ENCODE measurements at regions of chr2 and their contacts with region 1.

Region 1: GRCh38 chr2:42196403-42197267 is 27.5 kb downstream of the EML4 start:
- DNase-seq: peak in 12 of 14 experiments; percentile 16 to 79 (median 37)
- ATAC-seq: peak; percentile 82
- H3K4me3 ChIP-seq: no peak overlapping the region
- H3K4me3 Mint-ChIP-seq: peak overlapping the region; percentile 63
- H3K27ac ChIP-seq: no peak overlapping the region
- H3K27ac Mint-ChIP-seq: peak overlapping the region; percentile 61
- H3K4me1 ChIP-seq: peaks cover 48% of the 10 kb centered on the region
- H3K4me1 Mint-ChIP-seq: peaks cover 89% of the 10 kb centered on the region
- H3K27me3 ChIP-seq: no peaks in the 10 kb centered on the region
- H3K27me3 Mint-ChIP-seq: no peaks in the 10 kb centered on the region
- CTCF ChIP-seq: peak; percentile 92

Region 2: GRCh38 chr2:41869542-41870264 is 326.9 kb before region 1 on chr2:
- CTCF ChIA-PET with region 1: no interaction called
- POLR2A ChIA-PET with region 1: no interaction called
- intact Hi-C with region 1: loop called in 1 of 2 experiments (anchors 10 kb)
- DNase-seq: peak; percentile 51 to 85 (median 67)
- ATAC-seq: peak; percentile 78
- H3K4me3 ChIP-seq: no peak overlapping the region
- H3K4me3 Mint-ChIP-seq: no peak overlapping the region
- H3K27ac ChIP-seq: no peak overlapping the region
- H3K27ac Mint-ChIP-seq: no peak overlapping the region
- H3K4me1 ChIP-seq: peaks cover 34% of the 10 kb centered on the region
- H3K4me1 Mint-ChIP-seq: peaks cover 11% of the 10 kb centered on the region
- H3K27me3 ChIP-seq: no peaks in the 10 kb centered on the region
- H3K27me3 Mint-ChIP-seq: peaks cover 11% of the 10 kb centered on the region
- CTCF ChIP-seq: peak; percentile 83

Region 3: GRCh38 chr2:42095923-42096408 is 100.7 kb before region 1 on chr2:
- CTCF ChIA-PET with region 1: interaction called, 7 read pairs
- POLR2A ChIA-PET with region 1: interaction called, 15 read pairs
- intact Hi-C with region 1: loop called (anchors 1 kb)
- DNase-seq: peak; percentile 67 to 90 (median 74)
- ATAC-seq: peak; percentile 69
- H3K4me3 ChIP-seq: no peak overlapping the region
- H3K4me3 Mint-ChIP-seq: peak overlapping the region; percentile 23
- H3K27ac ChIP-seq: no peak overlapping the region
- H3K27ac Mint-ChIP-seq: peak overlapping the region; percentile 41
- H3K4me1 ChIP-seq: peaks cover 51% of the 10 kb centered on the region
- H3K4me1 Mint-ChIP-seq: peaks cover 50% of the 10 kb centered on the region
- H3K27me3 ChIP-seq: no peaks in the 10 kb centered on the region
- H3K27me3 Mint-ChIP-seq: no peaks in the 10 kb centered on the region
- CTCF ChIP-seq: peak; percentile 86

Region 4: GRCh38 chr2:42132966-42133641 is 63.5 kb before region 1 on chr2:
- CTCF ChIA-PET with region 1: interaction called, 8 read pairs
- POLR2A ChIA-PET with region 1: interaction called, 10 read pairs
- intact Hi-C with region 1: loop called in 1 of 2 experiments (anchors 2 kb)
- DNase-seq: peak; percentile 81 to 98 (median 88)
- ATAC-seq: peak; percentile 87
- H3K4me3 ChIP-seq: peak overlapping the region; percentile 29
- H3K4me3 Mint-ChIP-seq: peak overlapping the region; percentile 63
- H3K27ac ChIP-seq: peak overlapping the region; percentile 78 to 95
- H3K27ac Mint-ChIP-seq: peak overlapping the region; percentile 87
- H3K4me1 ChIP-seq: peaks cover 100% of the 10 kb centered on the region
- H3K4me1 Mint-ChIP-seq: peaks cover 88% of the 10 kb centered on the region
- H3K27me3 ChIP-seq: no peaks in the 10 kb centered on the region
- H3K27me3 Mint-ChIP-seq: no peaks in the 10 kb centered on the region
- CTCF ChIP-seq: no peak

Region 5: DNA sequence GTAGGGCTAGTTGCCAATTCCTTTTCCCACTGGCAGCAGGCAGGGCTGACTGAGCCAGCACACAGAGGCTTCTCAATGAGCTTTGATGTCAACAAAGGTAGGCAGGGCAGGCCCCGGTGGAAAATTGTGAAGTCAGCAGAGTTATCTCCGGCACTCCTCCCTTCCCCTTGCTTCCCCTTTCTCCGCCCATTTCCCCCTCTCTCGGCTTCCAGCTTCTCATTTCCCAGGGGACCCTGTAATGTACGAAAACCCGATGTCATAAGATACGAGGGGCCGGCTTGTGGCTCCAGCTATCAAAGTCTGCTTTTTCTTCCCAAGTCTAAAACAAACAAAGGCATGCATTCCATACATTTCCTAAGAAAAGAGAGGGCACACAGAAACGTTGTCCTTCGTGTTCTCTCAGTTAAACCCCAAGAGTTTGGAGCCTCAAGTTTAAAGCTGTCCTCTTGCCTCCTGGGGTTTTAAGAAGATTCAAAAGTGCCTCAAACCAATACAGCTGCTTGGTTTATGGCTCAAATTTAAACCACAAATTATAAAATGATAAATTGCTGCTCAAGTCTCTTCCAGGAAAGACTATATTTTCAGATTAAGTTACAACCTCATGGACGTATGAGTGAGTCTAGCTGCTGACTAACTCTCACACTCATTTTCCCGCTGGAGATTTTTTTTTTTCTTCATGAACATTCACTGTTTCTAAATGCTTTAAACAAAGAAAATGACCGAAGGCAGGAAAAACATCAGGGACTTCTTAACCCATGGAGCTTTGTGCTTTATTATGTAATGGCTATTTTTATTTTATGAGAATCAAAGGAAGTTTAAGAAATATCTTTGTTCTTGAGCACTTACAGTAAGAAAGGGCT is 54.7 kb before region 1 on chr2:
- CTCF ChIA-PET with region 1: interaction called, 5 read pairs
- POLR2A ChIA-PET with region 1: no interaction called
- intact Hi-C with region 1: loop called in 1 of 2 experiments (anchors 5 kb)
- DNase-seq: peak in 10 of 14 experiments; percentile 11 to 60 (median 36)
- ATAC-seq: peak; percentile 78
- H3K4me3 ChIP-seq: no peak overlapping the region
- H3K4me3 Mint-ChIP-seq: peak overlapping the region; percentile 65
- H3K27ac ChIP-seq: peak overlapping the region; percentile 18 to 19
- H3K27ac Mint-ChIP-seq: peak overlapping the region; percentile 85
- H3K4me1 ChIP-seq: peaks cover 60% of the 10 kb centered on the region
- H3K4me1 Mint-ChIP-seq: peaks cover 57% of the 10 kb centered on the region
- H3K27me3 ChIP-seq: no peaks in the 10 kb centered on the region
- H3K27me3 Mint-ChIP-seq: no peaks in the 10 kb centered on the region
- CTCF ChIP-seq: no peak

Region 6: GRCh38 chr2:42176992-42177738 is 19.5 kb before region 1 on chr2:
- CTCF ChIA-PET with region 1: interaction called, 8 read pairs
- POLR2A ChIA-PET with region 1: interaction called, 9 read pairs
- intact Hi-C with region 1: loop called in 1 of 2 experiments (anchors 1 kb)
- DNase-seq: no peak
- ATAC-seq: no peak
- H3K4me3 ChIP-seq: no peak overlapping the region
- H3K4me3 Mint-ChIP-seq: no peak overlapping the region
- H3K27ac ChIP-seq: no peak overlapping the region
- H3K27ac Mint-ChIP-seq: no peak overlapping the region
- H3K4me1 ChIP-seq: peaks cover 64% of the 10 kb centered on the region
- H3K4me1 Mint-ChIP-seq: peaks cover 60% of the 10 kb centered on the region
- H3K27me3 ChIP-seq: no peaks in the 10 kb centered on the region
- H3K27me3 Mint-ChIP-seq: no peaks in the 10 kb centered on the region
- CTCF ChIP-seq: no peak

Region 7: DNA sequence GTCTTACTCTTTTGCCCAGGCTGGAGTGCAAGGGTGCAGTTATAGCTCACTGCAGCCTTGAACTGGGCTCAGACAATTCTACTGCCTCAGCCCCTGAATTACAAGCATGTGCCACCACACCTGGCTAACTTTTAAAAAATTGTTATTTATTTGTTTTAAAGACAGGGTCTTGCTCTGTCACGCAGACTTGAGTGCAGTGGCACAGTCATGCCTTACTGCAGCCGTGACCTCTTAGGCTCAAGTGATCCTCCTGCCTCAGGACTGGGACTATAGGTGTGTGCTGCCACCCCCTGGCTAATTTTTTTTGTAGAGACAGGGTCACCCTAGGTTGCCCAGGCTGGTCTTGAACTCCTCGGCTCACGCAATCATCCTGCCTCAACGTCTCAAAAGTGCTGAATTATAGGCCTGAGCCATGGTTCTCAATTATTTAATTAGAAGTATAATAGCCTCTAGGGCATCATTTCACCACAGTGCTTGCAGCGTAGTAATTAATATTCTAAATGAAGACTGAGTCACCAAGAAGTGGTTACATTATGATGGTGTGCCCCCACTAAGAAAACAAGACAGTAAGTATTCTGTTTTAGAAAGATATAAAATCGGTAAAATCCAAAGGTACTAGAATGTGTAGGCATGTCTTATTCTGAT is 42.1 kb after region 1 on chr2:
- CTCF ChIA-PET with region 1: interaction called, 3 read pairs
- POLR2A ChIA-PET with region 1: interaction called, 3 read pairs
- intact Hi-C with region 1: loop called in 1 of 2 experiments (anchors 5 kb)
- DNase-seq: peak in 13 of 14 experiments; percentile 12 to 71 (median 27)
- ATAC-seq: peak; percentile 79
- H3K4me3 ChIP-seq: no peak overlapping the region
- H3K4me3 Mint-ChIP-seq: no peak overlapping the region
- H3K27ac ChIP-seq: no peak overlapping the region
- H3K27ac Mint-ChIP-seq: no peak overlapping the region
- H3K4me1 ChIP-seq: peaks cover 29% of the 10 kb centered on the region
- H3K4me1 Mint-ChIP-seq: peaks cover 95% of the 10 kb centered on the region
- H3K27me3 ChIP-seq: no peaks in the 10 kb centered on the region
- H3K27me3 Mint-ChIP-seq: no peaks in the 10 kb centered on the region
- CTCF ChIP-seq: peak; percentile 52

Measured in CD4-positive, alpha-beta T cell (primary cell).